ENCODE measurements at regions of chr1 and their contacts with region 1.

Region 1: GRCh38 chr1:1441002-1441888 is 5.8 kb downstream of the VWA1 start:
- DNase-seq: peak; percentile 87
- CTCF ChIP-seq: peak; percentile 79

Region 2: DNA sequence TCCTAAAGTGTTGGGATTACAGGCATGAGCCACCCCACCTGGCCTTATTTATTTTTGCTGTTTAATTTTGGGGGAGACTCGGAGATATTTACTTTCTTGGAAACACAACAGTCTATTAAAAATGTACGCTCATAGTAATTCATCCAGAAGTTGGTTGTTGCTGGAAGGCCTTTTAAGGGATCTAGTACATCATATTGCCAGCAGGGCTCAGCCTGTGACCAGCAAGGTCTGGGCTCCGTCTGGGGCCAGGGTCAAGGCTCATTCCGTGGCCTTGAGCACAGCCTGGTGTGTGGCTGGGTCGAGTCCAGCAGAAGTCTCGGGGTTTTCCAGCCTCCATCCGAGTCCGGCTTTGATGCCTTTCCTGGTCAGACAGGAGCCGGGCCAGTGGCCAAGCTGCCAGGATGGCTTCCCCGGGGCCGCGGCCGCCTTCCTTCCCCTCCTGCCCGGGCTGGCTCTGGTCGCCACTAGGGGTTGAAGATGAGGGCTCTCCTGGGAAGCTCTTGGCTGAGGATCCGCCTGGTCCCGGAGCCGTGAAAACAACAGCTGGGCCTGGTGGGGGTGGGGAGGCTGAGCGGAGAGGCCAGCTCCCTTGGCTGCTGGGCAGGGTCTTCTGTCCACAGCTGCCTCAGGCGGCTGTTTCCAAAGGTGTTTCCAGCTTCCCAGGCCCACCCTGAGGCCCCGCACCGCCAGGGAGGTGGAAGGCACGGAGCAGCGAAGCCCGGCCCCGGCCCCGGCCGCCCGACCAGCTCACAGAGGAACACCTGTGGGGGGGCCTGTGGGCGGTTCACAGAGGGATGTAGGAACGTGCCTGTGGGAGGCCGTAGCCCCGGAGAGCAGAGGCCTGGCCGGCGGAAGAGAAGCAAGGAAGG is 10.9 kb before region 1 on chr1:
- CTCF ChIA-PET with region 1: interaction called, 14 read pairs
- POLR2A ChIA-PET with region 1: no interaction called
- DNase-seq: no peak
- CTCF ChIP-seq: no peak

Region 3: DNA sequence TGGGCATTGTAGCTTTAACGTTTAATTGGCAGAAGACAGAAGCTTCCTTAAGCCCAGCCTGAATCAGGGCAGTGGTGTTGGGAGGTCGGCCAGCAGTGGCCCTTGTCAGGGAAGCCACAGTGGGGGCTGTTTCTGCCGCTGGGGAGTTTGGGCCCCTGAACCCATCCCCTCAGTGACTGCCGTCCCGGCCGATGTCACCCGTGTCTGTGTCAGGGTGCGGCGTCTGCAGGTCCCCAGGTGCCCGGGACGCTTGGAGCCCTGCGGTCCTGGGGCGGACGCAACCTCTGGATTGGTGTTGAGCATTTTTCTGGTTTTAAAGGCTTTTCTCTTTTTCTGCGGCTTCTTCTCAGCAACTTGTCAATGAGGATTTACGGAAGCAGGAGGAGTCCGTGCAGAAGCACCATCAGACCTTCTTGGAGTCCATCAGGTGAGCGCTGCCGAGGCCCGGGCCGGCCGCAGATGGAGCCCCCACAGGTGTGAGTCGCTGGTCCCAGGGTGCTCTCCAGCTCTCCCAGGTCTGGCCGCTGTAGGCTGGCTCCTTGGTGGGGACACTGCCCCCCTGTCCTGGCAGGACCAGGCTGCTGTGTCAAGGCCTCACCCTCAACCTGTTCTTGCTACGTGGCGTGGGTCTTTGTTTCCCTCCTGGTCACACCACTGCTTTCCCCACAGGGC is 10.6 kb after region 1 on chr1:
- CTCF ChIA-PET with region 1: interaction called, 11 read pairs
- POLR2A ChIA-PET with region 1: no interaction called
- DNase-seq: no peak
- CTCF ChIP-seq: no peak

Measured in GM10248 (cell line).